HepG2 (cell line): ENCODE measurements at regions of chr2 and their contacts with region 1.

Region 1: DNA sequence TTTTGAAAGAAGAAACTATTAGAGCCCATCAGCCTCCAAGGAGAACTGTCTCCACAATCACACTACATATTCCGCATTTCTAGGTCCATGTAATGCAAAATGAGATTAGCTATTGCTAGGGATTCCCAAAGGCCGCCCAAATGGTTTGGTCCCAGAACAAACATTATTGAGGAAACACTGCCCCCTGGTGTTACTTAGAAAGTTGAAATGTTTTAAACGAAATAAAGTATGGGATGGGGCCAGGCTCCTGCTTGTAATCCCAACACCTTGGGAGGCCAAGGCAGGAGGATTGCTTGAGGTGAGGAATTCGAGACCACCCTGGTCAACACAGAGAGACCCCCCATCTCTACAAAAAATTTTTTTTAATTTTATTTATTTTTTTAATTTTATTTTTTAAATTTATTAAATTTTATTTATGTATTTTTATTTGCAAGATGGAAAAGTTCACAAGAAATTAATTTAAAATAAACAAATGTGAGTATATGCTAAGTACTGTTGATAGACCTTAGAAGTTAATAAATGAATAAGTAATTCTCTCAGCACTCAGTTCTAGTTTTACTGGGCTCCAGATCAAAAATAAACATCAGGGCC is 5.5 kb downstream of the NHEJ1 start:
- DNase-seq: peak; percentile 83
- ATAC-seq: peak; percentile 63
- H3K4me3 ChIP-seq: no peak overlapping the region
- H3K27ac ChIP-seq: no peak overlapping the region
- H3K4me1 ChIP-seq: peaks cover 6% of the 10 kb centered on the region
- H3K27me3 ChIP-seq: no peaks in the 10 kb centered on the region
- CTCF ChIP-seq: peak; percentile 86
- EP300 ChIP-seq: no peak
- POLR2A ChIP-seq: no peak
- RAD21 ChIP-seq: peak; percentile 91

Region 2: DNA sequence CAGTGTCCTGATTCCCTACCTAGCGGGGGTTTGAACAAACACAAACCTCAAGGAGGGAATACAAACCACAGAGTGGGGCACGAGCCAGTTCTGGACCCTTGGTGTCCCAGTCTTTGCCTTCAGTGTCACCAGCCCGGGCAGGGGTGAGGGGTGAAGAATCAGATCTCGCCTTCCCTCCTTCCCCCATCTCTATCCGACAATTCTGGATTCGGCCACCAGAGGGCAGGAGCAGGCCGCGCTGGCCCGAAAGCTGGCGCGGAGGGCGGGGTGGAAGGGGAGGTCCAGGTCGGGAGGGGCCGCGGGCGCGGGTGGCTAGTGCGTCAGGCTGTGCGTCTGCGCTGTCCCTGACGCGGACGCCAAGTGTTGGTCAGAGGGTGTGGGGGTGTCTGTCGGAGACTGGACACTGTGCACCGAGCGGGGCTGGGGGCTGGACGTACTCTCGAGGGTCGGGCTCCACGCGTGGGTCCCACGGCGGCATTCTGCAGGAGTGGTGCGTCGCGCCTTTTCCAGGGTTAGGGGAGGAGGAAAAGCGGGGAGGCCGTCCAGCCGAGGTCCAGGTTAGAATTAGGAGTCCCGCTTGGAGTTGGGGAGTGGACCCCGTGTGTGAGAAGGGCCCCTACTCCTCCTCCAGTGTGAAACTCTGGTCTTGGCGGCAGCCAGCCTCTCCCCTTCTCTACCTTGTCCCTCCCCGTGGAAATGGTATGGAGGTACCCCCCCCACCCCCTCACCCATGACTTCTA is 159.0 kb before region 1 on chr2:
- CTCF ChIA-PET with region 1: interaction called, 12 read pairs
- POLR2A ChIA-PET with region 1: no interaction called
- in situ Hi-C with region 1: no loop called
- intact Hi-C with region 1: no loop called
- DNase-seq: peak; percentile 58
- ATAC-seq: peak; percentile 59
- H3K4me3 ChIP-seq: peak overlapping the region in 1 of 3 experiments; percentile 64; a peak in 1 of 6 replicates
- H3K27ac ChIP-seq: no peak overlapping the region
- H3K4me1 ChIP-seq: peaks cover 21% of the 10 kb centered on the region
- H3K27me3 ChIP-seq: peaks cover 52 to 96% of the 10 kb centered on the region in 2 experiments
- CTCF ChIP-seq: peak; percentile 98
- EP300 ChIP-seq: no peak
- POLR2A ChIP-seq: no peak
- RAD21 ChIP-seq: peak; percentile 79

Region 3: DNA sequence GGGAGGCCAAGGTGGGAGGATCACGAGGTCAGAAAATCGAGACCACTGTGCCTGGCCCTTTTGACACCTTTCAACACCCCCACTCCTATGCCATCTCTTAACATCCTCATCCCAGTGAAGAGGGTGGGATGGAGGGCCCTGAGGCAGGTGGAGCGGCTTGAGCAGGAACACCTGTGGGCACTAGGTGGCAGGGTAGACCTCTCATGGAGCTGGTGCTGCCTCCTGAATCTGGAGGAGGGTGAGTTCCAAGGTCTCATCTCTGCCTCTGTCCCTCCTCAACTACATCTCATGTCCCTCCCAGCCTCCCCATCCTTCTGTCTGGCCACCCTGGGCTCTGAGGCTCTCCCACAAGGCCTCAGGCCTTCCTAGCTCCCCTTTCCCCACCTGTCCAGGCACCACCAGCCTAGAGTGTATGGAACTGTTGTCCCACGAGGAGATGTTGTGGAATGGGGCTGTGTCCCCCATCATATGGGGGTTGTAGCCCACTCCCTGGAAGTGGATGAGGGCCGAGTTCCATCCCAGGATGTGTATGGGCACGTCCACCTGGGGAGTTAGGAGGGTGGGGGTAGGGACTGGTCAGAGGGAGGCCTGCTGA is 144.9 kb before region 1 on chr2:
- CTCF ChIA-PET with region 1: interaction called, 13 read pairs
- POLR2A ChIA-PET with region 1: no interaction called
- in situ Hi-C with region 1: no loop called
- intact Hi-C with region 1: no loop called
- DNase-seq: peak; percentile 37
- ATAC-seq: peak; percentile 95
- H3K4me3 ChIP-seq: no peak overlapping the region
- H3K27ac ChIP-seq: no peak overlapping the region
- H3K4me1 ChIP-seq: peaks cover 7% of the 10 kb centered on the region; the same call in 1 of the 2 replicates
- H3K27me3 ChIP-seq: peaks cover 16 to 51% of the 10 kb centered on the region in 2 experiments
- CTCF ChIP-seq: peak; percentile 84
- EP300 ChIP-seq: no peak
- POLR2A ChIP-seq: no peak
- RAD21 ChIP-seq: 0 out of 2 replicates have a peak, but pooled peaks have one; percentile 59

Region 4: GRCh38 chr2:219029829-219030165 is 125.4 kb before region 1 on chr2:
- CTCF ChIA-PET with region 1: interaction called, 48 read pairs
- POLR2A ChIA-PET with region 1: interaction called, 3 read pairs
- in situ Hi-C with region 1: no loop called
- intact Hi-C with region 1: loop called (anchors 1 kb)
- DNase-seq: peak; percentile 73
- ATAC-seq: peak; percentile 88
- H3K4me3 ChIP-seq: no peak overlapping the region
- H3K27ac ChIP-seq: no peak overlapping the region
- H3K4me1 ChIP-seq: no peaks in the 10 kb centered on the region
- H3K27me3 ChIP-seq: peaks cover 18 to 83% of the 10 kb centered on the region in 2 experiments
- CTCF ChIP-seq: peak; percentile 98
- EP300 ChIP-seq: no peak
- POLR2A ChIP-seq: no peak
- RAD21 ChIP-seq: peak; percentile 95

Region 5: GRCh38 chr2:219073413-219074129 is 81.6 kb before region 1 on chr2:
- CTCF ChIA-PET with region 1: interaction called, 15 read pairs
- POLR2A ChIA-PET with region 1: interaction called, 3 read pairs
- in situ Hi-C with region 1: no loop called
- intact Hi-C with region 1: loop called (anchors 1 kb)
- DNase-seq: peak; percentile 80
- ATAC-seq: peak; percentile 66
- H3K4me3 ChIP-seq: no peak overlapping the region
- H3K27ac ChIP-seq: no peak overlapping the region
- H3K4me1 ChIP-seq: peaks cover 53% of the 10 kb centered on the region
- H3K27me3 ChIP-seq: no peaks in the 10 kb centered on the region
- CTCF ChIP-seq: peak; percentile 88
- EP300 ChIP-seq: no peak
- POLR2A ChIP-seq: no peak
- RAD21 ChIP-seq: peak; percentile 90

Region 6: GRCh38 chr2:219099329-219099728 is 55.8 kb before region 1 on chr2:
- CTCF ChIA-PET with region 1: no interaction called
- POLR2A ChIA-PET with region 1: no interaction called
- in situ Hi-C with region 1: no loop called
- intact Hi-C with region 1: no loop called
- DNase-seq: no peak
- ATAC-seq: no peak
- H3K4me3 ChIP-seq: no peak overlapping the region
- H3K27ac ChIP-seq: no peak overlapping the region
- H3K4me1 ChIP-seq: 0 out of 2 replicates have a peak, but pooled peaks cover 6% of the 10 kb centered on the region
- H3K27me3 ChIP-seq: no peaks in the 10 kb centered on the region
- CTCF ChIP-seq: no peak
- EP300 ChIP-seq: no peak
- POLR2A ChIP-seq: no peak
- RAD21 ChIP-seq: no peak